Thyroid gland (tissue), 4 donors: ENCODE measurements at regions of chr16 and their contacts with region 1.

Region 1: DNA sequence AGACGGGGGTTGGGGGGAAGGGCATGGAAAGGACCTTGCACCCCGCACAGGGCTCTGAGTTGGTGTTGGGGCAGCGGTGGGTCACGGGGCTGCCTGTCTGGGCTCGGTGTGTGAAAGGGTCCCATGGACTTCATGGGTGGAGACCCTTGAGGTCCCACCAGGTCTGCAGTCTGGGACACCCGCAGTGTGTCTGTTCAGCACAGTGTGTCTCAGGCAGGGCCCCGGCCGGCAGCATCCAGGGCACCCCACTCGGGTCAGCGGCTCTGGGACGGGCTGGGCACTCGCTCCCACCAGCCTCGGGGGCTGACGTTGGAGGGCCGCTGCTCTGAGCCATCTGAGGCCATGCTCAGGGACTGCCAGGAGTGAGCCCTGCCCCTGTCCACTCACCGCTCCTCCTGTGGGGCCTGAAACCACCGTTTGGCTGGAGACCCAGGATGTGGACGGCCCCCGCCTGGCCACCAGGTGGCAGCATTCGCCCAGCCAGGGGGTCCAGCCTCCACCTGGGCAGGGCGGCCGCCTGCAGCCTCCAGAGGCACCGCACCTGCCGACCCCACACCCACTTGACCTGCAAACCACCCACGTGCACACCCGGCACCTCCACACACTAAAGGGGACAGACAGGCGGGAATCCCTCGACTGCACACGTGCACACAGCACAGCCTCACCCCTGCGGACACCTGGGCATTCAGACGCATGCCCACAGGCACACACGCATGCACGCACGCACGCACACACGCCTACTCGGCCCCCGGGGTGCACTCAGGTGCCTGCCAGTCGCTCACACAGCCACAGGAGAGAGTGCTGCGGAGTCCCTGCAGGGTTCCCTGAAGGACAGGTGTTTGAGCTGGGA is 10.1 kb upstream of the ZFPM1 start:
- DNase-seq: peak; percentile 81 to 85
- H3K4me3 ChIP-seq: no peak overlapping the region
- H3K27ac ChIP-seq: no peak overlapping the region
- H3K4me1 ChIP-seq: peaks cover 0 to 8% of the 10 kb centered on the region in 2 donors
- H3K27me3 ChIP-seq: no peaks in the 10 kb centered on the region
- CTCF ChIP-seq: peak; percentile 80 to 98 (median 96)
- POLR2A ChIP-seq: no peak

Region 2: DNA sequence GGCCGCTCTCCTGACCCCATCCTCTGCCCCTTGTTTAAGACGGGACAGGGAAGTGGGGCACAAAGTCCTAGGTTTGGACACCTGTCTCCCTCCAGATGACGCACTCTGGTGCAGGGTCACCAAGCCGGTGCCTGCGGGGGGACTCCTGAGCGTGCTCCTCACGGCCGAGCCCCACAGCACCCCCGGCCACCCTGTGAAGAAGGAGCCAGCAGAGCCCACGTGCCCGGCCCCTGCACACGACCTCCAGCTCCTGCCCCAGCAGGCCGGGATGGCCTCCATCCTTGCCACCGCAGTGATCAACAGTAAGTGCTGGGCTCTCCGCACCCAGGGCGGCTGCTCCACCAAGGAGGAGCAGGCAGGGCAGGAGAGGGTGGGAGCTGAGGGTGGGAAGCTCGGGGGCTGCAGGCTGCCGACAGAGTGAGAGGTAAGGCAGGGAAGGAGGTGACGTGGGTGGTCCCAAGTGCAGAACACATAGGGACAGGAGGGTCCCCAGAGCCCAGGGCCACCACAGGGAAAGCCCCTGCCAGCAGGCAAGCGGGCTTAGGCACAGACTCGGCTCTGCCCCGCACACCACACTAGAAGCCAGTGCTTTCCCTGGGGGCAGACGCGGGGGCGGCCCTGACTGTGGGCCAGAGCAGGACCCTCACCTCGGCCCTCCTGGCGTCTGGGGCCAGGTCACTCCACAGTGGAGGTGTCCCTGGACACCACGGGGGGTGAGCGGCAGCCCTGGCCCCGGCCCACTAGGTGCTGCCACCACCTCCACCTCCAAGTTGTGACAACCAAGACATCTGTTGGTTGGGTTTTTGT is 85.2 kb after region 1 on chr16:
- intact Hi-C with region 1: loop called (anchors 2 kb)
- DNase-seq: no peak
- H3K4me3 ChIP-seq: no peak overlapping the region
- H3K27ac ChIP-seq: no peak overlapping the region
- H3K4me1 ChIP-seq: peaks cover 14 to 18% of the 10 kb centered on the region in 2 donors
- H3K27me3 ChIP-seq: no peaks in the 10 kb centered on the region
- CTCF ChIP-seq: no peak
- POLR2A ChIP-seq: no peak

Region 3: GRCh38 chr16:88561485-88562369 is 118.8 kb after region 1 on chr16:
- intact Hi-C with region 1: loop called (anchors 2 kb)
- DNase-seq: peak; percentile 42 to 56
- H3K4me3 ChIP-seq: no peak overlapping the region
- H3K27ac ChIP-seq: no peak overlapping the region
- H3K4me1 ChIP-seq: peaks cover 0 to 4% of the 10 kb centered on the region in 2 donors
- H3K27me3 ChIP-seq: peaks cover 3% of the 10 kb centered on the region
- CTCF ChIP-seq: peak; percentile 24 to 63 (median 40)
- POLR2A ChIP-seq: no peak

Region 4: DNA sequence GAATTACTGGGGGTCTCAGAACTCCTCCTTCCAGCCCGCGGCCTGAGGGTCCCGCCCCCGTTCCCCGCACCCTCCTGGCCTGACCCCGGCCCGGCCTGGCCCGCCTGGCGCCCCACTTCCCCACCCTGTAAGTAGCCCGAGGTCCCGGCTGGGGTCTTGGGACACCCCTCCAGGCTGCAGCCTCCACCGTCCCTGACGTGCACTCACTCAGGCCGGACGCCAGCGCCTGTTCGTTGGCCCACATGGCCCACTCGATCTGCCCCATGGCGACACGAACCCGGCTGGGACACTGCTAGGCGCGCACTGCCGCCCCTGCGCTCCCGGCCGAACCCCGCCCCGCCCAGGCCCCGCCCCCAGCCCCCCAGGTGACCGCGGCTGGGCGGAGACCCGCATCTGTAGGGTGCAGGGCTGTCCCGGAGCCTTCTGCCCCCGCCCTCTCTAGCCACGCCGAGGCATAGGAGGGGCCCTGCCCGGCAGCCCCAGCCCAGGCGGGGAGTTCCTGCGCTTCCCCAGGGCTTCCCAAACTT is 207.9 kb after region 1 on chr16 and contains the start of gene CYBA:
- intact Hi-C with region 1: loop called (anchors 10 kb)
- DNase-seq: peak; percentile 86 to 90
- H3K4me3 ChIP-seq: peak within 1 kb of the TSS; percentile 66 to 70 (median 68)
- H3K27ac ChIP-seq: peak within 1 kb of the TSS; percentile 58 to 83 (median 73)
- H3K4me1 ChIP-seq: peaks cover 17 to 19% of the 10 kb centered on the region in 2 donors
- H3K27me3 ChIP-seq: no peaks in the 10 kb centered on the region
- CTCF ChIP-seq: no peak
- POLR2A ChIP-seq: peak in 1 of 2 donors; percentile 53
- total RNA-seq, gene CYBA: 199 to 475 (median 339) TPM